ENCODE measurements at regions of chr5 and their contacts with region 1.

Region 1: DNA sequence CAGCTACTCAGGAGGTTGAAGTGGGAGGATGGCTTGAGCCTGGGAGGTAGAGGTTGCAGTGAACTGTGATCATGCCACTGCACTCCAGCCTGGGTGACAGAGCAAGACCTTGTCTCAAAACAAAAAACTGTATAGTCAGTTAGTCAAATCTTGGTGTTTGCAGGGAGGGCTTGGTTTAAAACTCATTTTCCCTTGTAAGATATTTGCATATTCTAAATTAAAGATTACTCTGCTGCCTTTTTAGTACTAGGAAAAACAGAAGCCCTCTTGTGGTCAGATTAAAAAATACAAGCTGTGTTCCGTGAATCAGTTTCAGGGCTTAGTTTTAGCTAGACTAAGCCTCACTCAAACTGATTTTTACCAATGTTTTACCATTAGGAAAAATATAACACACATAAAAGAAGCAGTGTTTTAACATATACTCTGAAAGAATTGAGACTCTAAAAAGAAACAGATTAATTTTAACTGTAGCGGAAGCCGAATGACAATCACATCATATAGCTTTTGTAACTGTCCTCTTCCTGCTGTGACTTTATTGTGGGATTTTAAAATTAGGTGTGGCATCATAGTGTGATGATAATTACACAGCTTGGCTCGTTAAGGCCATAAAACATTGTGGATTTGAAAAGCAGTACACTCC is 84.9 kb upstream of the BASP1 start:
- DNase-seq: no peak
- H3K4me3 Mint-ChIP-seq: no peak overlapping the region
- H3K27ac Mint-ChIP-seq: no peak overlapping the region
- H3K4me1 Mint-ChIP-seq: peaks cover 6% of the 10 kb centered on the region
- H3K27me3 Mint-ChIP-seq: peaks cover 13% of the 10 kb centered on the region

Region 2: DNA sequence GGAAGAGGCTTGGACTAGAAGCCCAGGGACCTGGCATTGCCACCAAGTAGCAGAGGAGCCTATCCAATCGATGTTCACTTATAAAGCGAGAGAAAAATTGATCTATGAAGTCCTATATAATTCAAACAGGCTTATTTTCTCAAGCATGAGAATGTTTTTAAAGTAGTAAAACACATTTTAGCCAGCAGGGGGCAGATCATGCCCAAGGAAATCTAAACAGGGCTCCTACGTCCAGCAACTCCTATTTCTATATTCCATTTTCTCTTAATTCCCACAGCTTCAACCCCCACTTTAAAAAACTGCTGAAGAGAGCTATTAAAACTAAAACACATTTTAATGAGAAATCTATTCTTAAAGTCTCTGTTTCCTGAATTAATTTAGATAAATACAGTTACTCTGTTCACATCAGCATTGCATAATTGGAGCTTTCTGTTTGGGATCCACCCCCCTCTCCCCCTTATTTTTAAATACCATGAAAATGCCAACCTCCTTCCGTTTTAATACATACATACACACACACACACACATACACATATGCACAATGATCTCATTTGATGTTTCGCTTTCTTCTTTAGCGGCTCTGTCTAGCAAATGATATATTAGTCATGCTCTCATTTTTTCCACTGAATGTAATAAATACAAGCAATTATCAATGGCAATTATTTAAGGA is 341.4 kb before region 1 on chr5:
- CTCF ChIA-PET with region 1: interaction called, 16 read pairs
- POLR2A ChIA-PET with region 1: no interaction called
- intact Hi-C with region 1: loop called (anchors 1 kb)
- DNase-seq: no peak
- H3K4me3 Mint-ChIP-seq: no peak overlapping the region
- H3K27ac Mint-ChIP-seq: no peak overlapping the region
- H3K4me1 Mint-ChIP-seq: peaks cover 5% of the 10 kb centered on the region
- H3K27me3 Mint-ChIP-seq: peaks cover 10% of the 10 kb centered on the region

Region 3: GRCh38 chr5:17189381-17190036 is 56.9 kb after region 1 on chr5:
- CTCF ChIA-PET with region 1: interaction called, 10 read pairs
- POLR2A ChIA-PET with region 1: no interaction called
- intact Hi-C with region 1: no loop called
- DNase-seq: peak; percentile 64
- H3K4me3 Mint-ChIP-seq: no peak overlapping the region
- H3K27ac Mint-ChIP-seq: no peak overlapping the region
- H3K4me1 Mint-ChIP-seq: peaks cover 2% of the 10 kb centered on the region
- H3K27me3 Mint-ChIP-seq: peaks cover 3% of the 10 kb centered on the region

Region 4: GRCh38 chr5:17204133-17204489 is 71.5 kb after region 1 on chr5:
- CTCF ChIA-PET with region 1: no interaction called
- POLR2A ChIA-PET with region 1: no interaction called
- intact Hi-C with region 1: no loop called
- DNase-seq: no peak
- H3K4me3 Mint-ChIP-seq: no peak overlapping the region
- H3K27ac Mint-ChIP-seq: no peak overlapping the region
- H3K4me1 Mint-ChIP-seq: no peaks in the 10 kb centered on the region
- H3K27me3 Mint-ChIP-seq: peaks cover 2% of the 10 kb centered on the region